A673 (cell line): ENCODE measurements at regions of chr3 and their contacts with region 1.

Region 1: DNA sequence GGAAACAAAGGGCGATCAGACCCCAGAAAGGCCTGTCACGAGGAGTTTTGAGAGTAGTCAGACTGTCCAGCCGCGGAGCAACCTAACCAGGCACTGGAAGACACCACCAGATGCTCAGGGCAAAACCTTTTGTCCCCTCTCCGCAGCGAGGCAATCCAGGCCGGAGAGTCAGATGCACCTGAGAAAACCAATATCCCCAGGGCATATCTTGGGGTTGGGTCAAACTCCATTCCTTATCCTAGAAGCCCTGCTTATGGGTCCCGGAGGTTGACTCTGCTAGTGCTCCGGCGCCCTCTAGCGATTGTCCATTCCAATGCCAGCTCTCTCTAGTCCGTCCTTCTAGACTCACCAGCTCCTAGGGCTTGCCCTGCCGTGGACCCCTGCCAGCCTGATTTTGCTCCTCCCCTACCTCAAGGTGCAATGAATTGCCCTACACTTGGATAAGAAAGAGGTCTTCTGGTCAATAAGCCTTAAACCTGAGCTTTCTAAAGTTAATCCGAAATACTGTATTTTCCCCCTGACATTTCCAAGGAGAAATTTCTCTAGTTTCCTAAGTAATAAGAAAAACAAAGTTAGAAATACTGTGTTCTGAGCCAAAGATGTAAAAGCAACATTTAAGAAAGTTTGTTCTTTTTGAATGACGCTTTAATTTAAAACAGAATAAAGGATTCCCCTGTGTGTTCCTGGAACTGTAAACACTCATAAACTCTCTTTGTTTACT is 5.5 kb downstream of the CPNE4 start:
- DNase-seq: peak; percentile 91
- H3K4me3 ChIP-seq: no peak overlapping the region
- H3K27ac ChIP-seq: no peak overlapping the region
- H3K4me1 ChIP-seq: peaks cover 11% of the 10 kb centered on the region
- H3K27me3 ChIP-seq: peaks cover 4% of the 10 kb centered on the region
- CTCF ChIP-seq: peak; percentile 92

Region 2: DNA sequence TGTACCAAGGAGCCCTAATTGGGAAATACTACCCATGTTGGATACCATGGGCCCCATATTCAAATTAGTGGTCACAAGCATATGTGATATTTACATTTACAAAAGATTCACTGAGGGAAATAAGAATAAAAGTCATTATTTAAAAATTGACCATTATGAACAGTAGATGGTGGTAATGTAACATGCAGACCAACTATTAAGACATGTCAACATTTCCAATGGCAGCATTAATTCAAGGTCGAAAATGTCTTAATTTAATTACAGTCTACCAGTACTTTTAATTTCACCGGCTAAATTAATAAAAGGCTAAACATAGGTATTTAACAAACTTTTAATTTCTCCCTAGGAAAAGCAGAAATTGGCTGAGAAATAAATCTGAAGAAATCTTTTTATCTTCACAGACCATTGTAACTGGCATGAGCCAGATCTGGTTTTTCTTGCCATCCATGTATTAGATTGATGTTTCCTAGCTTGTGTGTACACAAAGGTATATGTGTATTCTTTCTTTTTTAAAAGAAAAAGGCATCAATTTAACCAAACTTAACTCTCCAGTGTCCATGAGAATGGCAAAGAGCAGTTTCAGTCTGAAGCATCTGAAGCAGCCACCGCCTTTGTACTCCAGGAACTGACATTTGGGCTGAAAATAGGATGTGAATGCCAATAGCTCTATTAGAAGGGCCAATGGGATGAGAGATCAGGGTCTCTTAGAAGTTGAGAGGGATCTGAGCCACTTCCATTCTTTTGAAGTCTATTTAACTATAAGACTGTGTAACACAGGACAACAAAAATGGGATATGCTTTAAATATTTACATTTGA is 976.1 kb before region 1 on chr3:
- CTCF ChIA-PET with region 1: no interaction called
- POLR2A ChIA-PET with region 1: no interaction called
- intact Hi-C with region 1: loop called (anchors 5 kb)
- DNase-seq: peak; percentile 16
- H3K4me3 ChIP-seq: no peak overlapping the region
- H3K27ac ChIP-seq: no peak overlapping the region
- H3K4me1 ChIP-seq: no peaks in the 10 kb centered on the region
- H3K27me3 ChIP-seq: no peaks in the 10 kb centered on the region
- CTCF ChIP-seq: peak; percentile 38

Region 3: GRCh38 chr3:131549340-131549739 is 480.0 kb before region 1 on chr3:
- CTCF ChIA-PET with region 1: interaction called, 7 read pairs
- POLR2A ChIA-PET with region 1: no interaction called
- intact Hi-C with region 1: loop called (anchors 1 kb)
- DNase-seq: peak; percentile 31
- H3K4me3 ChIP-seq: no peak overlapping the region
- H3K27ac ChIP-seq: no peak overlapping the region
- H3K4me1 ChIP-seq: no peaks in the 10 kb centered on the region
- H3K27me3 ChIP-seq: no peaks in the 10 kb centered on the region
- CTCF ChIP-seq: peak; percentile 76

Region 4: DNA sequence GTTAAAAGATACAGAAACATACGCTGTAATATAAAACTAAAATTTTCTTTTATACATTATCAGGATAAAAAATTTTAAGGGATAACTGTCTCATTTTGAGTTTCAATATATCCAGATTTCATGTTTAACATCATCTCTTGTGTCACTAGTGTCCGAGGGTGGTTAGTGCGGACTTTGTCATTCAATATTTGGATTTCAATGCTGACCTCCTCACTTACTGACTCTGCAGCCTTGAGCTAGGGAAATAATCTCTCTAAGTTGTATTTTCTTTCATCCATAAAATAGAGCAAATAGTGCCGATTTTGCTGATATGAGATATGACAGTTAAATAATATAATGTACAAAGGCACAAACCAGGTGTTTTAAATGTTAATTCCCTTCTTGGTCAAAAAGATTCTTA is 197.7 kb before region 1 on chr3:
- CTCF ChIA-PET with region 1: no interaction called
- POLR2A ChIA-PET with region 1: no interaction called
- intact Hi-C with region 1: no loop called
- DNase-seq: no peak
- H3K4me3 ChIP-seq: no peak overlapping the region
- H3K27ac ChIP-seq: no peak overlapping the region
- H3K4me1 ChIP-seq: peaks cover 4% of the 10 kb centered on the region
- H3K27me3 ChIP-seq: no peaks in the 10 kb centered on the region
- CTCF ChIP-seq: no peak

Region 5: DNA sequence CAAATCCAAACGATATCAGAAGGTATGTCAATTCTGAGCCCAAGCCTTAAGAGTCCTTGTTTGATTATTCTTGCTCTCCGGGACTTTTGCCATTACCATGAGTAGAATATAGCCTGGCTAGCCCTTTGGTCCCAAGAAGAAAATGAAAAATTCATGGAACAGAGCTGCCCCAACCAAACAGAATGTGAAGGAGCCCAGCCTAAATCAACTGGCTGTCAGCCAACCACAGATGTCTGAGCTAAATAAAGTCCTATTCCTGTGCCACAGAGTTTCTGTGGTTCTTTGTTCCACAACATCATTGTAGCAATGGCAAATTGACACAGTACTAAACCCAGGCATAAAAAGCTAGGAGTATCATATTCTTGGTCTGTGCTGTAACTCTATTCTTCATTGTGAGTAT is 179.7 kb before region 1 on chr3:
- CTCF ChIA-PET with region 1: no interaction called
- POLR2A ChIA-PET with region 1: no interaction called
- intact Hi-C with region 1: loop called (anchors 5 kb)
- DNase-seq: peak; percentile 44
- H3K4me3 ChIP-seq: no peak overlapping the region
- H3K27ac ChIP-seq: peak overlapping the region; percentile 97
- H3K4me1 ChIP-seq: peaks cover 76% of the 10 kb centered on the region
- H3K27me3 ChIP-seq: no peaks in the 10 kb centered on the region
- CTCF ChIP-seq: no peak